A549 (cell line): ENCODE measurements at regions of chr12 and their contacts with region 1.

Region 1: GRCh38 chr12:2884810-2885209 is 5.9 kb upstream of the TULP3 start:
- DNase-seq: no peak
- ATAC-seq: peak; percentile 54 to 59
- H3K4me3 ChIP-seq: no peak overlapping the region
- H3K27ac ChIP-seq: no peak overlapping the region
- H3K4me1 ChIP-seq: peaks cover 15% of the 10 kb centered on the region
- CTCF ChIP-seq: no peak
- EP300 ChIP-seq: no peak
- POLR2A ChIP-seq: no peak
- RAD21 ChIP-seq: no peak

Region 2: GRCh38 chr12:2752676-2753371 is 132.0 kb before region 1 on chr12:
- CTCF ChIA-PET with region 1: no interaction called
- POLR2A ChIA-PET with region 1: no interaction called
- DNase-seq: peak; percentile 25 to 49
- ATAC-seq: peak; percentile 91 to 98
- H3K4me3 ChIP-seq: no peak overlapping the region
- H3K27ac ChIP-seq: no peak overlapping the region
- H3K4me1 ChIP-seq: no peaks in the 10 kb centered on the region
- CTCF ChIP-seq: no peak
- EP300 ChIP-seq: no peak
- POLR2A ChIP-seq: no peak
- RAD21 ChIP-seq: no peak

Region 3: DNA sequence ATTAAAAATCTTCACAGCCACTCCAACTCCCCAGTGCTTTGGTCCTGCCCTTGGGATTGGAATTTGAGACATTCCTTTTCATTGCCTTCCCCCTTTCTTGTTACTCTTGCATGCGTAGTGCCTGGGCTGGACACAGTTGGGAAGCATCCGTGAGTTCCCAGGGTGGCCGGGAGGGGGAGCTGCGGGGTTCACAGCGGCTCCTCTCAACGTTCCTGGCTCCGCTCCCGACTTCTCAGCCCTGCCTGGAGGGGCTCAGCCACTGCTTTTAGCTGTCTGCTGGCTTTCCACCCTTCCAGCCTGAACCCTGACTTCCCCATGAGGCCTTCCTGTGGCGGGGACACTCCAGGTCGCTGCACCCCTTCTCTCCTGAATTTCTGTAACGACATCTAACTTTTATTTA is 31.2 kb before region 1 on chr12:
- CTCF ChIA-PET with region 1: interaction called, 14 read pairs
- POLR2A ChIA-PET with region 1: no interaction called
- DNase-seq: peak; percentile 77 to 92
- ATAC-seq: peak; percentile 70 to 86; a peak in 5 of 6 replicates
- H3K4me3 ChIP-seq: no peak overlapping the region
- H3K27ac ChIP-seq: no peak overlapping the region
- H3K4me1 ChIP-seq: peaks cover 11% of the 10 kb centered on the region
- CTCF ChIP-seq: peak; percentile 55
- EP300 ChIP-seq: no peak
- POLR2A ChIP-seq: no peak
- RAD21 ChIP-seq: peak in 1 of 2 experiments; percentile 45; a peak in 1 of 5 replicates

Region 4: GRCh38 chr12:3034067-3034750 is 149.4 kb after region 1 on chr12:
- CTCF ChIA-PET with region 1: interaction called, 18 read pairs
- POLR2A ChIA-PET with region 1: no interaction called
- DNase-seq: peak; percentile 79 to 82
- ATAC-seq: peak; percentile 92 to 95
- H3K4me3 ChIP-seq: no peak overlapping the region
- H3K27ac ChIP-seq: no peak overlapping the region
- H3K4me1 ChIP-seq: no peaks in the 10 kb centered on the region
- CTCF ChIP-seq: peak; percentile 50
- EP300 ChIP-seq: no peak
- POLR2A ChIP-seq: no peak
- RAD21 ChIP-seq: peak; percentile 54 to 69

Region 5: GRCh38 chr12:3041558-3042164 is 156.9 kb after region 1 on chr12:
- CTCF ChIA-PET with region 1: interaction called, 12 read pairs
- POLR2A ChIA-PET with region 1: interaction called, 6 read pairs
- DNase-seq: peak; percentile 87 to 90
- ATAC-seq: peak; percentile 85 to 95
- H3K4me3 ChIP-seq: no peak overlapping the region
- H3K27ac ChIP-seq: no peak overlapping the region
- H3K4me1 ChIP-seq: no peaks in the 10 kb centered on the region
- CTCF ChIP-seq: peak; percentile 78
- EP300 ChIP-seq: no peak
- POLR2A ChIP-seq: no peak
- RAD21 ChIP-seq: peak; percentile 69 to 74